Calu3 (cell line): ENCODE measurements at regions of chr1 and their contacts with region 1.

Region 1: GRCh38 chr1:116151739-116152576 is 40.8 kb downstream of the MAB21L3 start:
- DNase-seq: peak; percentile 76
- H3K4me3 Mint-ChIP-seq: peak overlapping the region; percentile 45
- H3K27ac Mint-ChIP-seq: no peak overlapping the region
- H3K4me1 Mint-ChIP-seq: peaks cover 27% of the 10 kb centered on the region
- H3K27me3 Mint-ChIP-seq: no peaks in the 10 kb centered on the region
- CTCF ChIP-seq: peak; percentile 70

Region 2: DNA sequence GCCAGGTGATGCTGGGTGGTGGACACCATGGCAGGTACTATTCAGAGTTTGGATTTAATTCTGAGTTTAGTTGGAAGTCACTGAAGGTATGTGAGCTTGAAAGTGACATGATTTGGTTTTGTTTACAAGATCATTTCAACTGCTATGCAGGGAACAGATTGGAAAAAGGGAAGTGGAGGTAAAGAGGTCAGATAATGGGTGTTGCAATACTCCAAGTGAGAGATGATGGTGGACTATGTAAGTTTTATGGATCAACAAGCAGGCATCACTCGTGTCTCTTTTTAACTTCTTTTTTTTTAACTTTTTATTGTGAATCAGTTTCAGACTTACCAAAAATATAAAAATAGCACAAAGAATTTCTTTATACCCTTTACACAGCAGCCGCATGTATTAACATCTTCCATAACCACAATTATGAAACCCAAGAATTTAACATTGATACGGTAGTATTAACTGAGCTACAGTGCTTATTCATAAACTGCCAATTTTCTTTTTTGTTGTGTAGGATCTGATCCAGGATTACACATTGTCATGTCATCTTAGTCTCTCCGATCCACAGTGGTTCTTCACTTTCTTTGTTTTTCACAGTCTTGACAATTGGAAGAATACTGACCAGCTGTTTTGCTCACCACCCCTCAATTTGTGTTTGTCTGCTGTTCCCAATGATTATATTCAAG is 286.1 kb before region 1 on chr1:
- CTCF ChIA-PET with region 1: no interaction called
- intact Hi-C with region 1: no loop called
- DNase-seq: no peak
- H3K4me3 Mint-ChIP-seq: no peak overlapping the region
- H3K27ac Mint-ChIP-seq: no peak overlapping the region
- H3K4me1 Mint-ChIP-seq: no peaks in the 10 kb centered on the region
- H3K27me3 Mint-ChIP-seq: peaks cover 45% of the 10 kb centered on the region
- CTCF ChIP-seq: no peak

Region 3: DNA sequence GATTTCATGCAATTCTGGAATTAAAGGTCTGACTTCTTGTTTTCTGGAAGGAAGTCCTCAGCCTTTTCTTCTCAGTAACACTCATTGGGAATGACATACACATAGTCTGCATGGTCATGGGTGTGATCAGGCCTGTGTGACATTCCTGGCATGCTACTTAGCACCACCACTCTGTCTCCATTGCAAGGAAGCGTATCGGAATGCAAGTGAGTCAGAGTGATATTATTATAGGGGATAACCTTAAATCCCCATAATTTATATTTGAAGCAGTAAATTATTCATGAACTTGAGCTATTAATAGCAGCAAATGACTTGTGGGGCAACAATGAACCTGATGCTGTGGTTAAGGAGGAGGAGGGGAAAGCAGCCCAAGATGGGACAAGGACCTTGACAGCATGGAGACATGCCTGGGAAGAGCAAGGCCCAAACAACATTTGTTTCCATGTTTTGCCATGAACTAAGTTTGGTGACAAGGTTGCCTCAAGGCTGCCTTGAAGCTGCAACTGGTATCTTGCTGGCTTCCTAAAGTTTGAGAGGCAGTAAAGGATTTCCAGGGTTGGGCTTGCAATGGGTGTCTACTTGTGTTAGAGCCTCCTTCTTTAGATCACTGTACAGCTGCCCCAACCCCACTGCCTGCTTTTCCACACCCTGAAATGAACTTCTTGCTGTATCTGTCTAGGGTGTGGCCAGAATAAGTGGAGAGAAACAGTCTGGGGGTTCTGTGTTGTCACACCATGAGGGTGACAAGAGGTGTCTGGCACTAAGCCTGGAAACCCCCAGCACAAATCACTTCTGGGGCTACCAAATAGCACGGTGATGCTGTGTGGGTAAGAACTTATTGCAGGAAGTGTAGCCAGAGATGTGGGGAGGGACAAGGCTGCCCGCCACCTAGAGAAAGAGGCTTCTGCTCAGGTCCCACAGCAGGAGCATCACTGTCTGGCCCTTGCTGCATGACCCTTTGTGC is 36.2 kb before region 1 on chr1:
- CTCF ChIA-PET with region 1: no interaction called
- intact Hi-C with region 1: no loop called
- DNase-seq: peak; percentile 6
- H3K4me3 Mint-ChIP-seq: no peak overlapping the region
- H3K27ac Mint-ChIP-seq: no peak overlapping the region
- H3K4me1 Mint-ChIP-seq: peaks cover 29% of the 10 kb centered on the region
- H3K27me3 Mint-ChIP-seq: no peaks in the 10 kb centered on the region
- CTCF ChIP-seq: no peak

Region 4: GRCh38 chr1:116372587-116373444 is 220.9 kb after region 1 on chr1 and contains the start of gene ATP1A1:
- CTCF ChIA-PET with region 1: no interaction called
- intact Hi-C with region 1: loop called (anchors 5 kb)
- DNase-seq: peak; percentile 96
- H3K4me3 Mint-ChIP-seq: peak within 1 kb of the TSS; percentile 79
- H3K27ac Mint-ChIP-seq: peak within 1 kb of the TSS; percentile 95
- H3K4me1 Mint-ChIP-seq: no peaks in the 10 kb centered on the region
- H3K27me3 Mint-ChIP-seq: no peaks in the 10 kb centered on the region
- CTCF ChIP-seq: no peak
- total RNA-seq, gene ATP1A1: 457 and 484 TPM in 2 replicates